Posterior vena cava (tissue), 2 donors: ENCODE measurements at regions of chr5 and their contacts with region 1.

Region 1: DNA sequence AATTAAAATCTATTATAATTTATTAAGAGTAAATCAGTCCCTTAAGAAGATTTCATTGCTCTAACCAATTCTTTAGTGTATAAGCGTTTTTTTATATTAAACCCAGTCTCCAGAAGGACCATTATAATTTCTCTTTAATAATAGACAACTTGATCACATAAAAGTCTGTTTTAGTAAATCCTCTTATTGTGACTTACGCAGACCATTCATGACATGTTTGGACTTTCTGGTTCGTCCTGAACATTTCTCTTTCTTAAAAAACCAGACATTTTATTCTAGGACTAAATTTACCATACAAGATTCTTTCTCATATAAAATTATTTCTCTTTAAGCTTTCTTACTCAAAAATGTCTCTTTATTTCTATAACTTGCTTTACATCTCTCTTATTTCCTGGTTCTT is 196.2 kb upstream of the RAI14 start:
- DNase-seq: no peak

Region 2: GRCh38 chr5:34007621-34008600 is 452.0 kb before region 1 on chr5 and contains the start of gene AMACR:
- intact Hi-C with region 1: loop called in 1 of 2 experiments (anchors 10 kb)
- DNase-seq: peak; percentile 96
- total RNA-seq, gene AMACR: 6.4 to 9.4 TPM

Region 3: GRCh38 chr5:34415559-34416198 is 44.2 kb before region 1 on chr5:
- intact Hi-C with region 1: no loop called
- DNase-seq: no peak

Region 4: GRCh38 chr5:34499001-34499734 is 39.3 kb after region 1 on chr5:
- intact Hi-C with region 1: no loop called
- DNase-seq: no peak

Region 5: GRCh38 chr5:35483191-35483590 is 1023.3 kb after region 1 on chr5:
- intact Hi-C with region 1: loop called in 1 of 2 experiments (anchors 5 kb)
- DNase-seq: no peak